Posterior vena cava (tissue), 2 donors: ENCODE measurements at regions of chr11 and their contacts with region 1.

Region 1: GRCh38 chr11:67082035-67082791 is 25.6 kb downstream of the RHOD start:
- DNase-seq: no peak

Region 2: DNA sequence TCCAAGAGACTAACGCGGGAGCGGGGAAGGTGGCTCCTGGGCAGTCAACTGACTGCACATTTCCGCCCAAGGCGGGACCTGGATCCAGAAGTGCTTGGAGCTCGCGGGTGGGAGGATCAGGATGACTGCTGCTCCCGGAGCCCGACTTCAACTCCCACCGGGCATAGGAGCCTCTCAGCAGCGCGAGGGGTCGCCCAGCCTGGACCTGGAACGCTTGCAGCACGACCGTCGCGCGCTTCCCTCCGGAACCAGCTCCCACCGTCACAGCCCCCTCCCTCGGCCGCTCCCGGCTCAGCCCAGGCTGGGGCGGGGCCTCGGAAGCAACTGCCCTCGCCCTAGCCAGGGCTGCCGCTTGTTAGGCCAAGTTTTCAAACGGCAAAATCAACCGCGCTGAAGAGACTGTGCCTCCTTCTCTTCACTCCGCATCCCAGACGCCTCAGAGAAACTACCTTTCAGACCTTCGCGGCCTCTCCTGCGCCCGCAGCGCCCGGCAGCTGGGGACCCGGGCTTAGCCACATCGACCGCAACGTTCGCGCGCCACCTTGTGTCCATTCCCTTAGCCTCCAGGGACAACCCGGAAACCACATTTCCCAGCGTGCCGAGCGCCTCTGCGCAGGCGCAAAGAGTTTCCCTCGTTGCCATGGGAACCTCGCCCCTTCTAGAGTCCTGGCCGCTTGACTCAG is 235.1 kb after region 1 on chr11:
- intact Hi-C with region 1: loop called in 1 of 2 experiments (anchors 5 kb)
- DNase-seq: peak; percentile 99

Region 3: DNA sequence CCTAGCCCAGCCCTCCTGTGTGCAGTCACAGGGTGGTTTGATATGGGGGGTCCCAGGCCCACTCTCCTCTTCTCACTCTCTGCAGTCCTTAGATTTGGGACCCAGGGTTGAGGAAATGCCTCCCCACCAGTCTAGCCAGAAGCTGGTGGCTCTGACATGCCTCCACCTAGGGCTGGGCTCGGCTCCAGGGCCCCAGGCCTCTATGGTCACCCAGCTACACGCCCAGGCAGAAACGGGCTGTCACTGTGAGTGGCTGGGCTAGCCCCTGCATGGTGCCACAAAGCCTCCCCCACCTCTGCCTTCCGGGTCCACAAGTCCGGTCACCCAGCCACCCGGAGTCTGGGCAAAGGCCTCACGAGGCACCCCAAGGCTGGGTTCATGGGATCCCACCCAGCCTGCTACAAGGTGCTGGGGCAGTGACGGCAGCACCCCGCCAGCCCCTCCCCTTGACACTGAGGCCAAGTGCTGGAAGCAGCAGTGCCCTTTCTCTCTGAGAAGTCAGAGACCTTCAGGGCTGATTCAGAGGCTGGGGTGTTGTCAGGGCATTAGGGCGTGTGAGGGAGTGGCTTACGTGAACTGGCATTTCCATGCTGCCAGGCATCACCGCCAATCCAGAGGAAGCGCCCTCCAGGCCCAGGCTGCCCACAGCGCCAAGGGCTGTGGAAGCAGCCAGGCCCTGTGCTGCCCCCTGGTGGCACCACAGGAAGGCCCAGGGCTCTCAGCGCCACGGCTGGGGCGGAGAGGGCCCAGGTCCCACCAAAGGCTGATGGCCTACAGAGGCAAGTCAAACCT is 423.6 kb after region 1 on chr11:
- intact Hi-C with region 1: no loop called
- DNase-seq: peak; percentile 97

Region 4: GRCh38 chr11:68459886-68460740 is 1377.9 kb after region 1 on chr11:
- intact Hi-C with region 1: loop called in 1 of 2 experiments (anchors 5 kb)
- DNase-seq: peak; percentile 99

Region 5: DNA sequence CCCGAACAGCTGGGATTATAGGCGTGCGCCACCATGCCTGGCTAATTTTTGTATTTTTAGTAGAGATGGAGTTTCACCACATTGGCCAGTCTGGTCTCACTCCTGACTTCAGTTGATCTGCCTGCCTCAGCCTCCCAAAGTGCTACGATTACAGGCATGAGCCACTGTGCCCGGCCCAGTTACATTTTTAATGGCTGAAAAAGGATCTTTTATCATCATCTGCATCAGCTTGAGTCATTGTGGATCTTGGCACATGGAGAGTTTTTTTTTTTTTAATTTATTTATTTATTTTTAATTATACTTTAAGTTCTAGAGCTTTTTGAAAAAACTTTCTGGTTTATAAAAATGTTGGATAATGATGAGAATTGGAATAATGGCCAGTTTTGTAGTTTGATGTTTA is 1830.0 kb after region 1 on chr11:
- intact Hi-C with region 1: no loop called
- DNase-seq: no peak